Transverse colon (tissue), 4 donors: ENCODE measurements at regions of chr1 and their contacts with region 1.

Region 1: GRCh38 chr1:2233997-2234761 is 6.1 kb downstream of the SKI start:
- DNase-seq: peak; percentile 81
- H3K4me3 ChIP-seq: peak overlapping the region in 2 of 4 donors; percentile 12 to 54
- H3K27ac ChIP-seq: peak overlapping the region; percentile 82 to 90 (median 85)
- H3K4me1 ChIP-seq: peaks cover 51 to 100% (median 94%) of the 10 kb centered on the region in 4 donors
- H3K27me3 ChIP-seq: no peaks in the 10 kb centered on the region
- CTCF ChIP-seq: no peak
- EP300 ChIP-seq: no peak
- POLR2A ChIP-seq: peak; percentile 40

Region 2: DNA sequence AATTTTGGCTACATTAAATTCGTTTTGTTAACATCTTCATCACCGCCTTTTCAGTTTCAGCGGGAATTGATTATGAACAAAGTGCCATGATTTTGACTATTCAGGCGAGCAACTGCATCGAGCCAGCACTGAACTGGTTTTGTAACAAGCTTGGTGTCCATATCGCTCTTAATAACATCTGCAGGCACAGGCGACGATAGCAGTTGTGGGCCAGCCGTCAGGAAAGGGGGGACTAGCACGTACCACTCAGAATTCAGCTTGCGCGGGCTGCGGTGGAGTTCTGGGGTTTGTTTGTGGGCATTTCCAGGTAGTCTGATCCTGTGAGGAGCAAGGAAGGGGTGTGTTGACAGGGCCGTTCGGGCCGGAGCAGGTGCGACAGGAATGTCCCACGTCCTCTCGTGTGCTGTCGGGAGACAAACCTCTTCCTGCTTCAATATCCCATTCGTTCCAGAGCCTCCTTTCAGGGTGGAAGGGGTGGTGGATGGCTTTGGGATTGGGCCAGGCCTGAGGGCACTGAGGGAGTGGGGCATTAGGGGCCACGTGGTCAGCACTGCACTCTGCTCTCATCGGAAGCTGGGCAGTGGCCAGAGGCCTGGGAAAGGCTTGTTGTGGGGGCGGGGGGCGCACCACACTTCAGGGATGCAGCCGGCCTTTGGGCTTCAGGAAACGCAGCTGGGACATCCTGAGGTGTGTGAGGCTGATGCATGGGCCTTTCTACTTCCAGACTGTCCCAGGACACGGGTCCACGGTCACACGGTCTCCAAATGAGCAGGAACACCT is 33.1 kb after region 1 on chr1:
- in situ Hi-C with region 1: no loop called
- intact Hi-C with region 1: no loop called
- DNase-seq: no peak
- H3K4me3 ChIP-seq: no peak overlapping the region
- H3K27ac ChIP-seq: no peak overlapping the region
- H3K4me1 ChIP-seq: peaks cover 24 to 73% (median 48%) of the 10 kb centered on the region in 4 donors
- H3K27me3 ChIP-seq: no peaks in the 10 kb centered on the region
- CTCF ChIP-seq: no peak
- EP300 ChIP-seq: no peak
- POLR2A ChIP-seq: no peak

Region 3: GRCh38 chr1:2279210-2279639 is 45.0 kb after region 1 on chr1:
- in situ Hi-C with region 1: no loop called
- intact Hi-C with region 1: loop called (anchors 5 kb)
- DNase-seq: no peak
- H3K4me3 ChIP-seq: no peak overlapping the region
- H3K27ac ChIP-seq: peak overlapping the region; percentile 65 to 72 (median 66)
- H3K4me1 ChIP-seq: peaks cover 41 to 69% (median 62%) of the 10 kb centered on the region in 4 donors
- H3K27me3 ChIP-seq: no peaks in the 10 kb centered on the region
- CTCF ChIP-seq: no peak
- EP300 ChIP-seq: no peak
- POLR2A ChIP-seq: no peak

Region 4: GRCh38 chr1:2314803-2315673 is 80.9 kb after region 1 on chr1:
- in situ Hi-C with region 1: no loop called
- intact Hi-C with region 1: loop called (anchors 5 kb)
- DNase-seq: peak; percentile 58
- H3K4me3 ChIP-seq: peak overlapping the region; percentile 45 to 64 (median 55)
- H3K27ac ChIP-seq: peak overlapping the region; percentile 85 to 91 (median 88)
- H3K4me1 ChIP-seq: peaks cover 32 to 62% (median 44%) of the 10 kb centered on the region in 4 donors
- H3K27me3 ChIP-seq: peaks cover 9% of the 10 kb centered on the region
- CTCF ChIP-seq: peak; percentile 67 to 100 (median 99)
- EP300 ChIP-seq: no peak
- POLR2A ChIP-seq: no peak

Region 5: DNA sequence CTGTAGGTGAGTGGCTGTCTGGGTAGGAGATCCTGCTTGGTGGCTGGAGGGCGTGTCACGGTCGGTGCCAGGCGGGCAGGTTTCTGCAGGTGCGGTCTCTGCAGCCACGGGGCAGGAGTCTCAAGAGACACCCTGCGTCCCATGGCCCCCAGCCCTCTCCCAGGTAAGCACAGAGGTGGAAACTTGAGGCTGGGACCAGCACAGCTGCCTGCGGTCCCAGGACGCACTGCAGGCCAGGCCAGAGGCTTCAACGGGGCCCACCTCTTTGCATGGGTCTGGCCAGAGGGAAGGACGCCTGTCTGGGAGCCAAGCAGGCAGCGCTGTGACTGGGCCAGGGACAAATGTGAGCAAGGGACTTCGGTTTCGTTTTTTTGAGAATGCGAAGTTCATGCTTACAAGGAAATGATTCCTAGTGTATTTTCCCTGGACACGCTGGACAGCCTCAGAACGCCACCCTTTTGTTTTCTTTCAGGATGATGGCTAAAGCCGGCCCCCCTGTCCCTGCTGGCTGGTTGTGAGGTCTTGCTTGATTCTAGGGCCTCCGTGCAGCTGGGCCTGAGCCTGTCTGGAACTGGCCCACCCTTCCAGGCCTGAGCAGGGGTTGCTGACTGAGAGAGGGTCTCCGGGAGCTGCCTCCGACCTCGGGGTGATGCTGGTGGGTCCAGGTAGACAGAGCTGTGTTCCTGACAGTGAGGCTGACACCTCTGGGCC is 118.8 kb after region 1 on chr1:
- in situ Hi-C with region 1: no loop called
- intact Hi-C with region 1: no loop called
- DNase-seq: no peak
- H3K4me3 ChIP-seq: no peak overlapping the region
- H3K27ac ChIP-seq: no peak overlapping the region
- H3K4me1 ChIP-seq: no peaks in the 10 kb centered on the region
- H3K27me3 ChIP-seq: no peaks in the 10 kb centered on the region
- CTCF ChIP-seq: no peak
- EP300 ChIP-seq: no peak
- POLR2A ChIP-seq: no peak